ENCODE measurements at regions of chr16 and their contacts with region 1.

Region 1: GRCh38 chr16:31430380-31431052 is 2.4 kb upstream of the COX6A2 start:
- DNase-seq: no peak
- H3K4me3 Mint-ChIP-seq: no peak overlapping the region
- H3K27ac Mint-ChIP-seq: no peak overlapping the region
- H3K4me1 Mint-ChIP-seq: peaks cover 15% of the 10 kb centered on the region
- H3K27me3 Mint-ChIP-seq: peaks cover 7% of the 10 kb centered on the region

Region 2: GRCh38 chr16:31411024-31411844 is 19.3 kb before region 1 on chr16:
- CTCF ChIA-PET with region 1: no interaction called
- POLR2A ChIA-PET with region 1: no interaction called
- DNase-seq: no peak
- H3K4me3 Mint-ChIP-seq: no peak overlapping the region
- H3K27ac Mint-ChIP-seq: no peak overlapping the region
- H3K4me1 Mint-ChIP-seq: peaks cover 19% of the 10 kb centered on the region
- H3K27me3 Mint-ChIP-seq: peaks cover 28% of the 10 kb centered on the region

Region 3: GRCh38 chr16:31440516-31441184 is 10.1 kb after region 1 on chr16:
- CTCF ChIA-PET with region 1: interaction called, 10 read pairs
- POLR2A ChIA-PET with region 1: interaction called, 6 read pairs
- DNase-seq: no peak
- H3K4me3 Mint-ChIP-seq: no peak overlapping the region
- H3K27ac Mint-ChIP-seq: no peak overlapping the region
- H3K4me1 Mint-ChIP-seq: peaks cover 26% of the 10 kb centered on the region
- H3K27me3 Mint-ChIP-seq: no peaks in the 10 kb centered on the region